ENCODE measurements at regions of chrX and their contacts with region 1.

Region 1: DNA sequence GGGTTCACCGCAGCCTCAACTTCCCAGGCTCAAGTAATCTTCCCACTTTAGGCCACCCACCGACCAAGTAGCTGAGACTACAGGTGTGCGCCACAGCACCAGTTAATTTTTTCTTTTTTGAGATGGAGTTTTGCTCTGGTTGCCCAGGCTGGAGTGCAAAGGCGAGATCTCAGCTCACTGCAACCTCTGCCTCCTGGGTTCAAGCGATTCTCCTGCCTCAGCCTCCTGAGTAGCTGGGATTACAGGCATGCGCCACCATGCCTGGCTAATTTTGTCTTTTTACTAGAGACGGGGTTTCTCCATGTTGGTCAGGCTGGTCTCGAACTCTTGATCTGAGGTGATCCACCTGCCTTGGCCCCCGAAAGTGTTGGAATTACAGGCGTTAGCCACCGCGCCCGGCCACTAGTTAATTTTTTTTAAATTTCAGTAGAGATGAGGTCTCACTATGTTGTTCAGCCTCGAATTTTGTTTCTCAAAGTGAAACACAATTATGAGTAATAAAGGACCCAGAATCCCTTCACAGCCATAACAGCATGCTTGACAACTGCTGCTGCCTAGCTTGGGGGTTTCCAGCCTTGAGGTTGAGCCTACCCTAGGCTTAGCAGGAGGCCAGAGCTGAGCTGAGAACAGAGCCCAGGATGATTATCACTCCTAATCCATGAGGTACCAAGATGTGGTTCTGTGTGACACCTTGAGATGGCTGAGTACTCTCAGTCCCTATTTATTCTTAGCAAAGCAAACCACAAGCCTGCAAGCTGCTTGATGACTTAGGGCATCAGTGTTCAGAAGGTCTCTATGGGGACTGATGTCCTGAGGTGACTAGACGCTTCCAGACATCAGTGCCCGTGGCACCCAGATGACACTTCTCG is 41.6 kb upstream of the NKRF start:
- DNase-seq: peak; percentile 70
- H3K4me3 Mint-ChIP-seq: no peak overlapping the region
- H3K27ac Mint-ChIP-seq: peak overlapping the region; percentile 89
- H3K4me1 Mint-ChIP-seq: peaks cover 38% of the 10 kb centered on the region
- H3K27me3 Mint-ChIP-seq: no peaks in the 10 kb centered on the region

Region 2: GRCh38 chrX:119617517-119618164 is 30.1 kb before region 1 on chrX:
- CTCF ChIA-PET with region 1: no interaction called
- POLR2A ChIA-PET with region 1: no interaction called
- DNase-seq: no peak
- H3K4me3 Mint-ChIP-seq: no peak overlapping the region
- H3K27ac Mint-ChIP-seq: no peak overlapping the region
- H3K4me1 Mint-ChIP-seq: no peaks in the 10 kb centered on the region
- H3K27me3 Mint-ChIP-seq: no peaks in the 10 kb centered on the region

Region 3: DNA sequence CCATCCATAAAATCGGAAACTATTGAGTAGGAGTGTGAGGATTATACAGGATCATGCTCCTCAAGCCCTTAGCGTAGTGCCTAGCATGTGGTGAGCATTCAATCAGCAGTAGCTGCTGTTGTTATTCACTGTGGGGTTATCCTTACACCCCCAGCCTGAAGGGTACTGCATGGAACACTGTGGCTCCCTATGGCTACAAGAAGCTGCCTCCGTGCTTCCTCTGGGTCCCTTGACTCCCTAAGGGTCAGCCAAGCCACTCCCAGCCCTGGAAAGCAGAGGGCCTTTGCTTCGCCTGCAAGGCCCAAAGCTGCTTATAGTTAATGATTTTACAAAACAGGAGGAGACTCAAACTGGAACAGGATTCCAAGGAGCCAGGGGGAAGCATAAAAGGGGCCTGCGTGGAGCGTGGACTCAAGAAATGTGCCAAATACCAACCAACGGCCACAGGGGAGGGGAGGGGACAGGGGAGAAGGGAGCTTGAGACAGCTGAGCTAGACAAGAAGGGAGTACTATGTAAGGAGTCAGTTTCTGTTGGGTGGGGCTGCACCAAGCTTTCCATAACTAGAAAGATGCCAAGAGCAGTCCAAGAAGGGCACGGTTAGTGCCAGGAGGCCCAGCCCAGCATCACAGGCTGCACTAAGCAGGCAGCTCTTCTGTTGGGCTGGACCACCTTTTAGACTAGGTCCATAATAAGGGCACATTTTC is 29.3 kb after region 1 on chrX:
- CTCF ChIA-PET with region 1: interaction called, 4 read pairs
- POLR2A ChIA-PET with region 1: interaction called, 31 read pairs
- DNase-seq: no peak
- H3K4me3 Mint-ChIP-seq: peak overlapping the region; percentile 78
- H3K27ac Mint-ChIP-seq: peak overlapping the region; percentile 99
- H3K4me1 Mint-ChIP-seq: peaks cover 55% of the 10 kb centered on the region
- H3K27me3 Mint-ChIP-seq: no peaks in the 10 kb centered on the region

Region 4: DNA sequence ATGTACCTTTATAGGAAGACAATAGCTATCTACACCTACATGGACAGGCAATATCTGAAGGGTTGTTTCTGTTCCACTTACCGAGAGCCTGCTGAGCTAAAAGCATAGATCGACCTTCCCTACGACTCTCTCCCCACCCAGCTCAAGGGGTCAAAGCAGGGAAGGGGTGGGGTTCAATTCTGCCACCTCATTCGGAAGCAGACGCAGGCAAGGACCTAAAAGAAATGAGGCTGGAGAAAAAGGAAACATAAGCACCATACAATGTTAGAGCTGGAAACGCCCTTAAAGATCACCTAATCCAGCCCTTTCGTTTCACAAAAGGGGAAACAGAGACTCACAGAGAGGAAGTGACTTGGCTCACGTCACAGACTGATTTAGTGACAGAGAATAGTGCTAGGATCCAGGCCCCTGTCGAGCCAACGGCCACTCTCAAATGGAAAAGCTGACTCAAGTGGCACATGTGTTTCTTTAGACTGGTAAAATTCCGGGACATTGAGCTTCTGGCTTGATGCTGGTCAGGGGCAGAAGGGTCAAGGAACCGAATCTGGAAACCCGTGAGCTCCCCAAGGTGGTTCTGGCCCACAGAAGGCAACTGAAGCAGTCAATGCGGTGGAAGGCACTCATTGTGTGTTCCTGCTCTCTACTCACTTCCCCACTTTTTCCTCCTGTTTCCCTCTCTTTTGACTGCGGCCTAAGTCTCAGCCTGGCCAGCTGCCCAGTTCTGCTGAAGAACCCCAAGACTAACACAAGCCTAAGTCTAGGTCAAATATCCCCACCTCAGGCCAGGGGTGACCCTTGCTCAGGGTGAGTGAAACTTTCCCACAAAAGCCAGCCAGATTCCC is 37.7 kb after region 1 on chrX:
- CTCF ChIA-PET with region 1: interaction called, 3 read pairs
- POLR2A ChIA-PET with region 1: interaction called, 44 read pairs
- DNase-seq: peak; percentile 64
- H3K4me3 Mint-ChIP-seq: peak overlapping the region; percentile 98
- H3K27ac Mint-ChIP-seq: peak overlapping the region; percentile 100
- H3K4me1 Mint-ChIP-seq: peaks cover 70% of the 10 kb centered on the region
- H3K27me3 Mint-ChIP-seq: no peaks in the 10 kb centered on the region

Region 5: DNA sequence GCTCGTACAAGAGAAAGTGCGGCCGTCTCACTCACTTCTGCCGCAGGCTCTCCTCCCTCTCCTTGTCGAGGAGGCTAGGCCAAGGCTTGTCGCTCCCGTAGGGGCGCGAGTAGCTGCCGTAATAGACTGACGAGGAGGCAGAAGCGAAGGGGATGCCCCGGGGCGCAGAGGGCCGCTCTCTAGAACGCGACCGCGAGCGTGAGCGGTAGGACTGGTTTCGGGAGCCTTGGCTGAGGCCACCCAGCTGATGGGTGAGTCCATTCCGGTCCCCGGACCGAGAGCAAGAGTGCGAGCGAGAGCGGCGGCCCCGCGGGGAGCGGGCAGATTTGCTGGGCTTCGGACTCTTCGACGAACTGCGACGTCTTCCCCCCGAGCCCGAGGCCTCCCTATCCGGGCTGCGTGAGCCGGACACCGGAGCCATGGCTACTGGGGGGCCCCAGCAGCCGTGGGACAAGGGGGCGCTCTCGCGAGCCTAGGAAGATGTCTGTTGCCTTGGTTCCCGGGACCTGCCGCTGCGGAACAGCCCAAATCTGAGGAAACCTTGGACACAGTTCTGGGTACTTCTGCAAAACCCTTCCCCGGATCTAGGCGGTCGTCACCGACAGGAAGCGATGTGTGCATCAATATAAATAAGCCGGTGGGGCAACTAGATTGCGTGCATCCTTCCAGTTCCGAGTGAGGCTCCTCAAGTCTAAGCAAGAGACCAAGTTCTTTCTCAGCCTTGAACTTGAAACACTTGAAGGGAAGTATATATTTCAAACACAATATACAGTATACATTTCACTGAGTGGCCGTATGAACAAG is 295.6 kb after region 1 on chrX and contains the start of gene NKAP:
- CTCF ChIA-PET with region 1: no interaction called
- POLR2A ChIA-PET with region 1: no interaction called
- DNase-seq: peak; percentile 84
- H3K4me3 Mint-ChIP-seq: peak within 1 kb of the TSS; percentile 93
- H3K27ac Mint-ChIP-seq: peak within 1 kb of the TSS; percentile 95
- H3K4me1 Mint-ChIP-seq: peaks cover 23% of the 10 kb centered on the region
- H3K27me3 Mint-ChIP-seq: peaks cover under 1% of the 10 kb centered on the region
- total RNA-seq, gene NKAP: 10.2 to 10.4 TPM